ENCODE measurements at regions of chr20 and their contacts with region 1.

Region 1: GRCh38 chr20:50153485-50154377 is at the start of gene PEDS1:
- DNase-seq: peak; percentile 88
- ATAC-seq: peak; percentile 91
- H3K4me3 Mint-ChIP-seq: peak within 1 kb of the TSS; percentile 83
- H3K27ac Mint-ChIP-seq: peak within 1 kb of the TSS; percentile 89
- H3K4me1 Mint-ChIP-seq: peaks cover 41% of the 10 kb centered on the region
- H3K27me3 Mint-ChIP-seq: peaks cover 15% of the 10 kb centered on the region
- CTCF ChIP-seq: no peak
- total RNA-seq, gene PEDS1: 35.0 to 36.7 TPM (median 35.6 TPM) in 3 replicates

Region 2: DNA sequence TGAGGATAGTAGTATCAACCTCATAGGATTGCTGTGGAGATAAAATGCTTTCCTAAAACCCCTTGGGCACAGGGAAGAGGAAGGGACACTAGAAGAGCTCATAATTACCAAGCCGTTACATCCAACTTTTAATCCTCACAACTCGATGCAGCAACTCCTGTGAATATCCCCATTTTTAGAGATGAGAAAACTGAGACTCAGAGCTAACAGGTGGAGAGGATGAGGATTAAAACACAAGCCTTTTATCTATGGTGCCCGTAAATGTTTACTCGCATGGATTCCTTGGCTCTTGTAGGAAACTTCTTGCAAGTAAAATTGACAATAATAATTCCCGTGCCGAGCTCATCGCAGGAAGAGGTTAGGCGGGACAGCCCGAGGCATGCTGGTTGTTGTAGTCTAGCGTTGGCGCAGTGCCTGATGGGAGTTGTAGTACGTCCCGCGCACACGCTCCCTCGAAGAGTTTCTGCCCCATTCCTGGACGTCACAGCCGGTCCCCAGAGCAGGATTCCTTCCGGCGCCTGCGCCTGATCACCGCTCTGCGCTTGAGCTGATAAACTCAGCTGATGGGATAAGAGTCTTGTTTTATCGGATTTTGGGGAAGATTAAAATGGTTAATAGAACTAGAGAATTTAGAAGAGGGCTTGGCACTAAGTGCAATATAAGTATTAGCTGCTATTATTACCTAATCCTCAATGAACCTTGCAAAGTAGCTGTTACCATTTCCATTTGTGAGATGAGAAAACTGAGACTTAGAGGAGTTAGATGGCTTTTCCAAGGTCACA is 37.9 kb before region 1 on chr20:
- CTCF ChIA-PET with region 1: interaction called, 89 read pairs
- POLR2A ChIA-PET with region 1: interaction called, 12 read pairs
- DNase-seq: peak; percentile 91
- ATAC-seq: peak; percentile 83
- H3K4me3 Mint-ChIP-seq: peak overlapping the region; percentile 98
- H3K27ac Mint-ChIP-seq: peak overlapping the region; percentile 91
- H3K4me1 Mint-ChIP-seq: peaks cover 39% of the 10 kb centered on the region
- H3K27me3 Mint-ChIP-seq: 0 out of 2 replicates have a peak, but pooled peaks cover 2% of the 10 kb centered on the region
- CTCF ChIP-seq: no peak

Region 3: DNA sequence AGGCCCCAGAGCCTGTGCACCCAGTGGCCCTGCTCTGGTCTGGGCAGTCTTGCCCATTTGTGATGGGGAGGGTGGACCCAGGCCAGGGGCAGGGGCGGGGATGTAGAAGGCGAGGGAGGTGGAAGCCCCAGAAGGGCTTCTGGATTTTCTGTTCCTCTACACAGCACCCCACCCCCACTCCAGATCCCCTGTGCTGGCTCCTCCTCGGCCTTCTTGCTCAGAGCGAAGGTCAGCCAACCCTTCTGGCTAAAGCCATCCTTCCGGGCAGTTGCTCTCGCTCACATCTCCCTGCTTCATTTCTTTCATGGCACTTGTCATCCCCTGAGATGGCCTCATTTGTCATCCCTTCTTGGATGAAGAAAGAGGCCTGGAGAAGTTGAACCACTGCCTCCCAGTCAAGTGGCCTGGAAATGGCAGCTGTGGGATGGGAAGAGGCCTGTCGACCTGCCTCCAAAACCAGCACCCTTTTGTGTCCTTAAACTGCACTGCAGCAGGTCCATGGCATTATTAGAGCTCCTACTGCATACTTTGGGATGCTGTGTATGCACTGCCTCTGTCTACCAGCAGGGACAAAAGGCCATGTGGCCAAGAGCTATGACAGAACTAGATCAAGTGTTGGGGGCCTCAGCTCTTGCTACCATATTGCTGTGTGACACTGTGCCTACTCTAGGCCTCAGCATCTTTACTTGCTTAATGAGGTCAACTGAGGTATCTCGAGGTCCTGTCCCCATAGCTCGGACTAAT is 20.1 kb before region 1 on chr20:
- CTCF ChIA-PET with region 1: interaction called, 17 read pairs
- POLR2A ChIA-PET with region 1: no interaction called
- DNase-seq: no peak
- ATAC-seq: peak; percentile 20; the same call in 1 of the 2 replicates
- H3K4me3 Mint-ChIP-seq: no peak overlapping the region
- H3K27ac Mint-ChIP-seq: no peak overlapping the region
- H3K4me1 Mint-ChIP-seq: peaks cover 4% of the 10 kb centered on the region; the same call in 1 of the 2 replicates
- H3K27me3 Mint-ChIP-seq: no peaks in the 10 kb centered on the region; the same call in 1 of the 2 replicates
- CTCF ChIP-seq: no peak

Region 4: DNA sequence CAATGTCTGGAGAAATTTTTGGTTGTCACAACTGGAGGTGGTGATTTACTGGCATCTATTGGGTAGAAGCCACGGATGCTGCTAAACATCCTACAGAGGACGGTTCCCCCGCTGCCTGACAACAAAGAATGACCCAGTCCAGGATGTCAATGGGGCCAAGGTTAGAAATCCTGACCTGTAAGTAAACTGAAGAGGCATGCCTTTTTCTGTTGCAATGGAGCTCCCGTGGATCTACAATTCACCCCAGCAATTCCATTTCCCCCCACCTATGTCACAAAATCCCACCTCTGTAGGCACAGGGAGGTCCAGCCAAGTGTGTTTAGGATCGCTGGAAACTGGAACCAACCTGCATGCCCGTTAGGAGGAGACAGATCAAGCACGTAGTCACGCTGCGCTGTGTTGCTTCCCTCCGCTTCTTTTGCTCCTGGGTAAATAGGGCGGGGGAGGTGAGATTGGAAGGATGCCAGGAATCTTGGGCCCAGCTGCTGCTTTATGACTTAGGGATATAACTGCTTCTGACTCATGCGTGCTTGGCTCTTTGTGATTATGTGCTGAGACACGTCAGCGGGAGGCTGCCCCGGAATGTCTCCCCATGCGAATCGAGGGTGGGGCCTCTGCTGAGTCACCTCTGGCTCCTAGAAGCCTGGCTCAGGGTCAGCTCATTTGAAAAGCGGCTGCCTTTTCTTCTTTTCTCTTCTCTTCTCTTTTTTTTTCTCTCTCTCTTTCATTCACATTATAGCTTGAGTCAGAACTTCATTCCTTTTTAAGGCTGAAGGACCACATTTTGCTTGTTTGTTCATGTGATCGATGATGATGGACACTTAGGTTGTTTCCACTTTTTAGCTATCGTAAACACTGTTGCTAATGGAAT is 12.2 kb after region 1 on chr20:
- CTCF ChIA-PET with region 1: interaction called, 36 read pairs
- POLR2A ChIA-PET with region 1: interaction called, 15 read pairs
- DNase-seq: peak; percentile 82
- ATAC-seq: peak; percentile 81
- H3K4me3 Mint-ChIP-seq: peak overlapping the region; percentile 65
- H3K27ac Mint-ChIP-seq: peak overlapping the region; percentile 80
- H3K4me1 Mint-ChIP-seq: peaks cover 25% of the 10 kb centered on the region
- H3K27me3 Mint-ChIP-seq: no peaks in the 10 kb centered on the region; the same call in 1 of the 2 replicates
- CTCF ChIP-seq: no peak

Region 5: GRCh38 chr20:50360029-50360672 is 206.4 kb after region 1 on chr20:
- CTCF ChIA-PET with region 1: no interaction called
- POLR2A ChIA-PET with region 1: no interaction called
- DNase-seq: no peak
- ATAC-seq: no peak
- H3K4me3 Mint-ChIP-seq: no peak overlapping the region
- H3K27ac Mint-ChIP-seq: no peak overlapping the region
- H3K4me1 Mint-ChIP-seq: peaks cover 7% of the 10 kb centered on the region
- H3K27me3 Mint-ChIP-seq: no peaks in the 10 kb centered on the region
- CTCF ChIP-seq: no peak

Measured in WTC11 (cell line).